Activated CD4-positive, alpha-beta memory T cell treated with anti-CD3 and anti-CD28 coated beads, Interleukin-2, amount 10 ng/mL, durations not matched to agents 7 days and 5 days (primary cell): ENCODE measurements at regions of chr7 and their contacts with region 1.

Region 1: DNA sequence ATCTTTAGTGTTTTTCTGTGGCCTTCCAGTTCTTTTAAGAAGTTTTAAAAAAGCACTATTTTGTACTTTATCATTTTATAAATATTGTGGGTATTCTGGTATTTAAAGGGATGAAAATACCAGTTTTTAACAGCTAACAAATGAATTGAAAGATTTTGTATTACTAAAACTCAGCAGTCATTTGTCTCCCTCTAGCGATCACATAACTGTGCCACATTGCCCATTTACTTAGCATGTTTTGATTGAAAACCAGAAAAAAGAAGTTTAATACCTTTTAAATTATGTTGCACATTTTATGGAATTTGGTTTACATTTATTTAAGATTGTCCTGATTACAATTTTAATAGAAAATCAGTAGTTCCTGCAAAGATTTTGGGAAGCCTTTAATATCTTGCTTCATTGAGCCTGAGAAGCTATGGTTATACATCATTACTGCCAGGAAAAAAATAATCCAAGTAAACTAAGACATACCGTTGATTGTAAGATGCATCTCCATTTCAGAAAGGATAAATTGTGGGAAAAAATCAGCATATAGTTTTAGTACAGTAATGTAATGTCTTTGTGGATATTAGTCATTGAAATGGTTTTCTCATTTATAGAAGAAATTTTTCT is 34.9 kb downstream of the TAX1BP1 start:
- DNase-seq: no peak
- H3K4me3 Mint-ChIP-seq: no peak overlapping the region
- H3K27ac Mint-ChIP-seq: no peak overlapping the region
- H3K4me1 Mint-ChIP-seq: no peaks in the 10 kb centered on the region
- H3K27me3 Mint-ChIP-seq: no peaks in the 10 kb centered on the region

Region 2: GRCh38 chr7:27734583-27734982 is 40.2 kb before region 1 on chr7:
- CTCF ChIA-PET with region 1: no interaction called
- POLR2A ChIA-PET with region 1: no interaction called
- DNase-seq: no peak
- H3K4me3 Mint-ChIP-seq: no peak overlapping the region
- H3K27ac Mint-ChIP-seq: no peak overlapping the region
- H3K4me1 Mint-ChIP-seq: peaks cover 7% of the 10 kb centered on the region
- H3K27me3 Mint-ChIP-seq: no peaks in the 10 kb centered on the region

Region 3: DNA sequence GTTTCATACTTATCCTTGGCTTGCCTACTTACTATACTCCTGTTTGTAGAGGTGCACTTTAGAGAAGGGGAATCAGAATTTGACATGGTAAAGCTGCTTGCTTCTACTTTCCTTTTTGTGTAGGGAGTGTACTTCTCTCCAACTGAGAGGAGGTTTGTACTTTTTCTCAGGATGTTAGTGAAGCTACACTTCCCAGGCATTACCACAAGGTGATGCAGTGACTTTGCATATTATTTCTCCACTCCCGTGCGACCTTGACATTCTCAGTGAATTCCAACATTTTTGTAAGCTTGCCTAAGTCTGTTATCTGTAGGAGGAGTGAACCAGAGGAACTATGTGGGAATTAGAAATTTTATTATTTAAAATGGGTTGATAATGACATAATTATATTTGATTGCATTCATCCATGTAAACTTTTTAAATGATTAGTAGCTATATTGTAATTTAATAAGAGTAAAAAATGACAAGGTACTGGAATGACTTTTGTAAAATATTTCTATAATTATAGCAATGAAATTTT is 29.7 kb before region 1 on chr7:
- CTCF ChIA-PET with region 1: interaction called, 15 read pairs
- POLR2A ChIA-PET with region 1: no interaction called
- DNase-seq: no peak
- H3K4me3 Mint-ChIP-seq: no peak overlapping the region
- H3K27ac Mint-ChIP-seq: no peak overlapping the region
- H3K4me1 Mint-ChIP-seq: peaks cover 39% of the 10 kb centered on the region
- H3K27me3 Mint-ChIP-seq: no peaks in the 10 kb centered on the region